ENCODE measurements at regions of chr15 and their contacts with region 1.

Region 1: DNA sequence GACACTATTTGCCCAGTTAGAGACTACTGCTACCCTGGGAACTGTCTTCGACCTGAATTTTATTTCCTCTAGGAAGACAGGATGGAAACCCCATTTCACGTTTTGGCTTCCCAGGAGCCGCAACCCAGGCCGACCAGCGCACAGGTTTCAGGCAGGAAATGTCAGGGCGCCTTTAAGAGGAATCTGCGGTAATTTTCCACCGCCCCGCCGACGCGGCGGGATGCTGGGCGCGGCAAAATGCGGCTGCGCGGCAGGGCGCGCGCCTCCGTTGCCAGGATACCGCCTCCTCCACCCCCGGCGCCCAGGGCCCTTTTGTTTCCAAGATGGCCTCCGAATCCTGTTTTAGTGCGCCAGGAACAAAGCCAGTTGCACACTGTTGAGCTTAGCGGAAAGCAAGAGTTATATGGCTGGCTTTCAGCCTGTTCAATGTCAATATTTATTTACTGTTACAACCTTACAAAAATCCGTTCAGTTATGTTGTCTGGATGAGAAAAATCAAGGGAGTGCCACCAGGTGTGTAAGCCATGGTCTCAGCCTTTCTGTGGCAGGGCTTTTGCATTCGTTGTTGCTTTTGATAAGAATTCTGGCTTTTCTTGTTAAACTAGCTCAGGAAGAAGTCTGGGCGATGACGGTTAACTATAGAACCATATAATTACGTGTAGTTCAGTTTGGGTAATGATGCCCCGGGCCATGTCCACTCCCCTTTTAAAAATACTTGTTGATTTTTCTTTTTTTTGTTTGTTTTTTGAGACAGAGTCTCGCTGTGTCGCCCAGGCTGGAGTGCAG is 79.7 kb upstream of the CHD2 start:
- DNase-seq: peak; percentile 92
- ATAC-seq: peak; percentile 72
- H3K4me3 Mint-ChIP-seq: peak overlapping the region; percentile 67
- H3K27ac Mint-ChIP-seq: peak overlapping the region; percentile 99
- H3K4me1 Mint-ChIP-seq: peaks cover 73% of the 10 kb centered on the region
- H3K27me3 Mint-ChIP-seq: no peaks in the 10 kb centered on the region
- CTCF ChIP-seq: no peak

Region 2: GRCh38 chr15:92831655-92832328 is 11.4 kb after region 1 on chr15:
- CTCF ChIA-PET with region 1: interaction called, 10 read pairs
- POLR2A ChIA-PET with region 1: interaction called, 34 read pairs
- DNase-seq: peak; percentile 92
- ATAC-seq: peak; percentile 100
- H3K4me3 Mint-ChIP-seq: peak overlapping the region; percentile 50
- H3K27ac Mint-ChIP-seq: peak overlapping the region; percentile 99
- H3K4me1 Mint-ChIP-seq: peaks cover 47% of the 10 kb centered on the region
- H3K27me3 Mint-ChIP-seq: no peaks in the 10 kb centered on the region
- CTCF ChIP-seq: no peak

Region 3: DNA sequence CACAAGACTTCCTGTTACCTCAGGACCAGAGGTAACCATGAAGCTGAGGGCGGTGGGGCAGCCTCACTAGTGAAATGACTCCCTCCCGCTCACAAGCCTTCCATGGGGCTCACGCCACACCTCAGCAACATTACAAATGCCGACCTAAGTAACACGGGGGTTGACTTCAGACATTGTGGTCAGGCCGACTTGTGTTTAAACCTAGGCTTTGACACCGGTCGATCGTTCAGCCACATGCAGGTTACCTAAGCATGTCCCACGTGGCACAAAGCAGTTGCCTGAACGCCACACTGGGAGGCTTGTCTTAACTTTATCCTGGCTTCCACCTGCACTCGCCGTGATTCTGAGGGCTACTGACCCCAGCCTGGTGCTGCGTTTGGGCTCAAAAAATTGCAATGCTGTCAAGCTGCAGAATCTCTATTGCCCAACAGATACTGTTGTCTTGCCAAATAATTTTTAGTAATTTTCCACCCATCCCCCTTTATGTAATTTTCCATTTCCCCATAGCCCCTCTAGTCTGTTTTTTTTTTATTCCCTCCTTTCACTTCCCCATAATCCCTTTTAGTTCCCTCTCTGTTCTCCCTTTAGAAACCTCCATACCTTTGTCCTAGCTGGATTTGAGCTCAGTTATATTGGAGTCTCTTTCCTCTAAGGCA is 427.2 kb after region 1 on chr15:
- CTCF ChIA-PET with region 1: no interaction called
- POLR2A ChIA-PET with region 1: no interaction called
- DNase-seq: no peak
- ATAC-seq: no peak
- H3K4me3 Mint-ChIP-seq: no peak overlapping the region
- H3K27ac Mint-ChIP-seq: no peak overlapping the region
- H3K4me1 Mint-ChIP-seq: peaks cover 12% of the 10 kb centered on the region
- H3K27me3 Mint-ChIP-seq: peaks cover 37% of the 10 kb centered on the region
- CTCF ChIP-seq: no peak

Measured in WTC11 (cell line).